ENCODE measurements at regions of chr14 and their contacts with region 1.

Region 1: DNA sequence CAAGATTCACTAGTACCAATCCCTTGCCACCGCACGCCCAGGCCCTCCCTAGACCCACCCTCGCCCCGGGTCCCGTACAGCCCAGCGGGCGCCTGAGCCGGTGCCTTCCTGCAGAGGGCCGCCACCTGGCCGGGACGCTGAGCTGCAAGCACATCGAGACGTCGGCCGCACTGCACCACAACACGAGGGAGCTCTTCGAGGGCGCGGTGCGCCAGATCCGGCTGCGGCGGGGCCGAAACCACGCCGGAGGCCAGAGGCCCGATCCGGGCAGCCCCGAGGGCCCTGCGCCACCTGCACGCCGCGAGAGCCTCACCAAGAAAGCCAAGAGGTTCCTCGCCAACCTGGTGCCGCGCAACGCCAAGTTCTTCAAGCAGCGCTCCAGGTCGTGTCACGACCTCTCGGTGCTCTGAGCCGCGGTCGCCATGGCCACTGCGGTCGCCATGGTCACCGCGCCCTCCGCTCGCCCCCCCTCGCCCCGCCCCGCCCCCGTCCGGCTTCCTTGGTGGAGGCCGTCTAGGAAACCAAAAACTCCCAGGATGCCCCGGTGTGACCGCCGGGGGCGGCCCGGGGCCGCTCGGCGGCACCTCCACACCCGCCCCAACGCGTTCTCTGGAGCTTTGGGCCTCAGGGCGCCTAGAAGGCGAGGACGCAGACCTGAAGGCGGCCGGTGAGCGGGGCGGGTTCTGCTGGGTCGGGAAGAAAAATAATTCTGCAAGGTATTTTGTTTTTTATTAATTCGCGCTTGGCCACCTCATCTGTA is 3.7 kb downstream of the REM2 start:
- DNase-seq: peak; percentile 45
- ATAC-seq: peak; percentile 72
- H3K4me3 ChIP-seq: peak overlapping the region; percentile 91
- H3K27ac ChIP-seq: peak overlapping the region; percentile 86
- H3K4me1 ChIP-seq: peaks cover 35% of the 10 kb centered on the region
- H3K27me3 ChIP-seq: no peaks in the 10 kb centered on the region
- CTCF ChIP-seq: peak; percentile 13 to 46 (median 18); a peak in 4 of 6 replicates
- EP300 ChIP-seq: no peak; a peak in 1 of 4 replicates
- POLR2A ChIP-seq: peak; percentile 79; the same call in 1 of the 2 replicates
- RAD21 ChIP-seq: no peak

Region 2: DNA sequence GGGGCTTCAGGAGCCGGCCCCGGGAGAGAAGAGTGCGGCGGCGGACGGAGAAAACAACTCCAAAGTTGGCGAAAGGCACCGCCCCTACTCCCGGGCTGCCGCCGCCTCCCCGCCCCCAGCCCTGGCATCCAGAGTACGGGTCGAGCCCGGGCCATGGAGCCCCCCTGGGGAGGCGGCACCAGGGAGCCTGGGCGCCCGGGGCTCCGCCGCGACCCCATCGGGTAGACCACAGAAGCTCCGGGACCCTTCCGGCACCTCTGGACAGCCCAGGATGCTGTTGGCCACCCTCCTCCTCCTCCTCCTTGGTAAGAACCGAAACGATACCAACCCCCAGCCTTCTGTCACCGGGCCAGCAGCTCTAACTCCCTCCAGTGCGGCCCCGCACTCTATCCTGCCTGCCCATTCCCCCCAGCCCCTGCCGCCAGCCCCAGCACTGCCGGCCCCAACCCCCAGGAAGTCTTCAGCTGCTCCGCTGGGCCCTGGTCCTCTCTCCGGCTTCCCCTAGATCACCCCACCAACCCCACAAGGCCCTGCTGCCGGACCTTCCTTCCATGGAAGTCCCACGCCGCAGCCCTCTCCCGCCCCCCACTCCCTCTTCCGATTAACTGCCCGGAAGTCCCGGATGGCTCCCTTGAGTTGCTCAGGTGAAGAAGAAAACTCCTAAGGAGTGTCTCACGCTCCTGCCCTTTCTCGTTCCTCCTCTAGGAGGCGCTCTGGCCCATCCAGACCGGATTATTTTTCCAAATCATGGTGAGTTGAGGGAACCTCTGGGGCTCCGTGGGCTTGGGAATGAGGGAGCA is 14.4 kb before region 1 on chr14:
- CTCF ChIA-PET with region 1: interaction called, 174 read pairs
- POLR2A ChIA-PET with region 1: interaction called, 45 read pairs
- RAD21 ChIA-PET with region 1: interaction called, 50 read pairs
- SMC1A ChIA-PET with region 1: interaction called, 110 read pairs
- in situ Hi-C with region 1: no loop called
- intact Hi-C with region 1: loop called (anchors 1 kb)
- DNase-seq: no peak
- ATAC-seq: peak; percentile 56
- H3K4me3 ChIP-seq: peak overlapping the region; percentile 74
- H3K27ac ChIP-seq: peak overlapping the region; percentile 93
- H3K4me1 ChIP-seq: peaks cover 8% of the 10 kb centered on the region
- H3K27me3 ChIP-seq: no peaks in the 10 kb centered on the region
- CTCF ChIP-seq: peak; percentile 95 to 98 (median 95)
- EP300 ChIP-seq: no peak
- POLR2A ChIP-seq: no peak
- RAD21 ChIP-seq: peak; percentile 75

Region 3: DNA sequence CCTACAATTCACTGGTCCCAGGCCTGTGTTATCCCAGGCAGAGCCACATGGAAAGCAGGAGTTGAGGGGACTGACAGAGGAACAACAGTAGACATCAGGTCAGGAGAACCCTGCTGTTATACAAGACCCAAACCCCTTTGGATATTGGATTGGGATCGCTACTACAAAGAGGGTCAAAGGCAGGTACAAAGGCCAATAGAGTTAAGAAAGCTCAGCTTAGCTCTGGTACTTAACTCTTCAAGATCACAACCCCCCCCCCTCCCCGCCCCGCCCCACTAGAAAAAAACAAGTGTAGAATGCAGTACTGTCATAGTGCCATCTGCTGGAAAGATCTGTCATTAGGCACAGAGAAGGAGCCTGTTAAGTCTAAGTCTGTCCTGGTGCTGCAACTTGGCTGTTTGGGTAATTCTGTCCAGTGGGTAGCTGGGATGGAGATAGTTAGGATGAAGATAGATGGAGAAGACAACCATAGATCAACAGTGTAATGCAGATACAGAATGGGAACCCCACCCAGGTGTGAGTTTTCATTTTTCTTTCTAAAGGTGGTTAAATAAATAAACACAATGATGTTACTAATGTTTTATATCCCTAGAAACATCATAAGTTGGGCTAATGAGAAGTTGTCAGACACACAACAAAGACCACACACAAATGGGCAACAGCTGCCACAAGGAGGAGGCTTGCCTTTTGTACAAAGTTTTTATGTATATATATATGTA is 13.6 kb after region 1 on chr14:
- CTCF ChIA-PET with region 1: interaction called, 49 read pairs
- POLR2A ChIA-PET with region 1: interaction called, 11 read pairs
- RAD21 ChIA-PET with region 1: interaction called, 27 read pairs
- SMC1A ChIA-PET with region 1: interaction called, 22 read pairs
- in situ Hi-C with region 1: no loop called
- intact Hi-C with region 1: no loop called
- DNase-seq: peak; percentile 47
- ATAC-seq: peak; percentile 95
- H3K4me3 ChIP-seq: no peak overlapping the region
- H3K27ac ChIP-seq: no peak overlapping the region
- H3K4me1 ChIP-seq: no peaks in the 10 kb centered on the region
- H3K27me3 ChIP-seq: no peaks in the 10 kb centered on the region
- CTCF ChIP-seq: peak; percentile 65 to 76 (median 69)
- EP300 ChIP-seq: no peak
- POLR2A ChIP-seq: no peak
- RAD21 ChIP-seq: peak; percentile 89